Tibial artery (tissue), 4 donors: ENCODE measurements at regions of chr2 and their contacts with region 1.

Region 1: GRCh38 chr2:156400706-156401678 is 35.2 kb upstream of the GPD2 start:
- DNase-seq: peak; percentile 71 to 86
- H3K4me3 ChIP-seq: peak overlapping the region; percentile 61 to 78
- H3K27ac ChIP-seq: peak overlapping the region; percentile 89 to 99
- H3K4me1 ChIP-seq: peaks cover 0 to 11% (median 4%) of the 10 kb centered on the region in 4 donors
- H3K27me3 ChIP-seq: no peaks in the 10 kb centered on the region
- CTCF ChIP-seq: no peak

Region 2: DNA sequence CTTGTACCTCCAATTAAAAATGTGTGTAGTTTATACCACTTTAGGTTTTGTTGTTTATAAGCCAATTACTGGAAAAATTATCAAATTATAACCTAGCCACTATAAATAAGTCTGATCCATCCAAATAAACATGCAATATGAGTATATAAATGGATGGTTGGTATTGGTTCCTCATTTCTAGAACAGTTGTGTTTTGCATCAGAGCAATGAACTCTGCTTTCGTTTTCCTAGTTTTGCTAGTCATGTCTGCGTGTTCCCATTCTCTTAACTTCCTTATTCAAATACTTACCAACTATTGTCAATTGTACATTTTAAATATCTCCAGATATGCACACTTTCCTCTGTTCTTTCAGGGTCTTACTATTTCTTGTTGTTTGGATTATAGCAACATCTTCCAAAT is 710.2 kb before region 1 on chr2:
- intact Hi-C with region 1: no loop called
- DNase-seq: no peak
- H3K4me3 ChIP-seq: no peak overlapping the region
- H3K27ac ChIP-seq: no peak overlapping the region
- H3K4me1 ChIP-seq: no peaks in the 10 kb centered on the region
- H3K27me3 ChIP-seq: no peaks in the 10 kb centered on the region
- CTCF ChIP-seq: no peak

Region 3: DNA sequence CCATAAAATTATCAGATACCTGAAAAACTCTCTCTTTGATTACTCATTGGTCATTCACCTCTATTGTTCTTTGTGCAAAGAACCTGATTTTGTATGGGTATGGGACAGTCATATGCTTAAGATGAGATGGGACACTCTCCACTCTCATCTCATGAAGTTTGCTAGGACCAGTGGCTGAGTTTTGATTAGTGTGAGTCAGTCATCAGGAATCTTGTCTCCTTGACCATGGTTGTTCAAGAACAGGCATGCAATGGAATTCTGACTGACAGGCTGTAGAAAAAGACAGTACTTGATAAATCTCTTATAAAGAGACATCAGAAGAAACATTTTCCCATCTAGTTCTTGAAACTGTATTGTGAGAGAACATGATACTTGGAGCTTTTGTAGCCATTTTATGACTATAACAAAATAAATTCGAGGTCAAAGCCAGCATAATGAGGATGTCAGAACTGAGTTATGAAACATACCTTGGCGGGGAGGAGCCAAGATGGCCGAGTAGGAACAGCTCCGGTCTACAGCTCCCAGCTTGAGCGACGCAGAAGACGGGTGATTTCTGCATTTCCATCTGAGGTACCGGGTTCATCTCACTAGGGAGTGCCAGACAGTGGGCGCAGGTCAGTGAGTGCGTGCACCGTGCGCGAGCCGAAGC is 435.5 kb before region 1 on chr2:
- intact Hi-C with region 1: no loop called
- DNase-seq: no peak
- H3K4me3 ChIP-seq: no peak overlapping the region
- H3K27ac ChIP-seq: no peak overlapping the region
- H3K4me1 ChIP-seq: no peaks in the 10 kb centered on the region
- H3K27me3 ChIP-seq: no peaks in the 10 kb centered on the region
- CTCF ChIP-seq: no peak

Region 4: DNA sequence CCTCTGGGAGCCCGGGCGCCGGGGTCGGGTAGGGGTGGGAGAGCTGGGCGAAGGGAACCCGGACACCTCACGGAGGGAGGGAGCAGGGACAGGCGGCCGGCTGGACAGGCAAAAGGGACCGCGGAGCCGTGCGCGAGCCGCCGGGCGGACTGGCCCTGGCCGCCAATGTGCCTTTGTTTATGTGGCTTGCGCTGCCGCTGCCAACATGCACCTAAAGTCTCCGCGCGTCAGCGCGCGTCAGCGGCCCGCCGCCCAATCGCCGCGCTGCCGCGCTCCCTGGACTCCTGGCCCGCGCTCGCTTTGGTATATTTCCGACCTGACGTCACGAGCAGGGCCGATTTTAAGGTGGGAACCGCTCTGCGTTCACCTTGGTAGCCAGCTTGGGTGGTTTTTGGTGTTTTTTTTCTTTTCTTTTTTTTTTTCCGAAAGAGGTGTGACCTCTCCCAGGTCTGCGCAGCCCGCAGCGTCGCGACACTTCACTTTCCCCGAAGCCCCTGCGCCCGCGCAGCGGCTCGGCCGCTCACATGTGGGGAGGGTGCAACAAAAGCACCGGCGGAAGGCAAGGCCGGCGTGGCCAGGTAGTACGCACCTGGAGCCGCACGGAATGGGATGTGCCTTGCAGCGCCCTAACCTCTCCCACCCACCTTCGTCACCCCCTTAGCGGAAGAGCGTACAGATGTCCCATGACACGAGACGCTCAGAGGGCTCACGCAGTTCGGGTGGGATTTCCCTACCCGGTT is 68.3 kb before region 1 on chr2 and contains the start of gene NR4A2:
- intact Hi-C with region 1: loop called (anchors 5 kb)
- DNase-seq: peak; percentile 92 to 96
- H3K4me3 ChIP-seq: peak within 1 kb of the TSS; percentile 87 to 89
- H3K27ac ChIP-seq: peak within 1 kb of the TSS; percentile 99 to 100
- H3K4me1 ChIP-seq: peaks cover 0 to 6% (median 5%) of the 10 kb centered on the region in 4 donors
- H3K27me3 ChIP-seq: no peaks in the 10 kb centered on the region
- CTCF ChIP-seq: peak in 1 of 2 experiments; percentile 8

Region 5: DNA sequence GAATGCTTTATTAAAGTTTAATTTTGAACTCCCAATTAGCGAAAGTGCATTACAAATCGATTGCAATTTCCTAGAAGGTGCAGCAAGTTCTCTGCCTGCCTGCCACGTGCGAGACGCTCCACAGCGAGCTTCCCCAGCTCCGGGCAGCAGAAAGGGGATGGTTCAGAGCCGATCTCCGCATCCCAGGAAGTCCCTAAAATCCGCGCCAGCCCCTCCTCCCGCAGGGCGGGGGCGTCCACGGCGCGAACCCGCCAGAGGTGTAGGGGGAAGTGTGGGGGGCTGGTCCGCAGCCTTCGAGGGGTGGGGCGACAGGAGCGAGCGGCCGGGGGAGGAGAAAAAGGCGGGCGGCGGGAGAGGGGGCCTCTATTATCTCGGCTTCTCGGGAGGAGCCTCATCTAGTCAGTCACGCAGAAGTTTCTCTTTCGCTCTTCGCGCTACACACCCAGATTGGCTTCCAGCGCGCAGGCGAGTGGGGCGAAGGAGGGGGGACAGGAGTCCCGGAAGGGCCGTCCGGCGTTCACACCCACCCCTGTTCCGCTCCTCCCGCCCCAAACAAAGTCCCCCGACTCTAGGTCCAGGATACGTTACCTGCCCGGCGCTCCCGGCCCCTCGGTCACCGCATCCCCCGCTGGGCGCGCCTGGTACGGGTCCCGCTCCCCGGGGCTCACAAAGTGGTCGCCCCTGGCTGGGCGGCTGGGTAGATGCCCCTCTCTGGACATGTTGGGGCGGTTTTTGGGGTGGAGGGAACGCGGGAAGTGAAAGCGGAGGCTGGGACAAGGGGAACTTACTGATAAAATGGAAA is 59.3 kb before region 1 on chr2:
- intact Hi-C with region 1: loop called (anchors 5 kb)
- DNase-seq: peak; percentile 93 to 98
- H3K4me3 ChIP-seq: peak overlapping the region; percentile 92 to 98
- H3K27ac ChIP-seq: peak overlapping the region; percentile 100
- H3K4me1 ChIP-seq: peaks cover 0 to 29% (median 15%) of the 10 kb centered on the region in 4 donors
- H3K27me3 ChIP-seq: no peaks in the 10 kb centered on the region
- CTCF ChIP-seq: no peak

Region 6: GRCh38 chr2:156435715-156436496 is 34.9 kb after region 1 on chr2 and contains the start of gene GPD2:
- intact Hi-C with region 1: loop called (anchors 2 kb)
- DNase-seq: peak; percentile 92 to 97
- H3K4me3 ChIP-seq: peak within 1 kb of the TSS; percentile 66 to 81
- H3K27ac ChIP-seq: peak within 1 kb of the TSS; percentile 98 to 100
- H3K4me1 ChIP-seq: peaks cover 0 to 40% (median 33%) of the 10 kb centered on the region in 4 donors
- H3K27me3 ChIP-seq: no peaks in the 10 kb centered on the region
- CTCF ChIP-seq: peak in 1 of 2 experiments; percentile 20